Head of caudate nucleus (tissue), 42 donors: ENCODE measurements at regions of chr1 and their contacts with region 1.

Region 1: GRCh38 chr1:178542560-178543356 is 29.8 kb downstream of the TEX35 start:
- DNase-seq: peak; percentile 76 to 97 (median 90)

Region 2: DNA sequence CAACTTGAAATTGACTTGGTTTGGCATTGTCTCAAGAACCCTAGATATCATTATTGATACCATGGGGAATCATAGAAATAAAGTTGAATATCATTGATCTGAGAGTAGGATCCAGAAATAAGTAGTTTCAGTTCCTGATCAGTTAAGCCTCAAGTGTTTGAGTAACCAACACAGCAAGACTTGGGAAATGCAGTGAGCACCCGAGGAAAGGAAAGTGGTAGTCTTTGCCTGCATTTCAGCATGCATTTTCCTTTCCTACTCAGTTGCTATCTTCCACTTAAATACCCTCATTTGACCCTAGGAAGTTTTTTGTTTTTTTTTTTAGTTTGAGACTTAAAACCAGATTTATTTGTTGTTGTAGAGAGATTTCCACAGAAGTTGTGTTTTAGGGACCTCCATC is 64.9 kb before region 1 on chr1:
- intact Hi-C with region 1: no loop called
- DNase-seq: no peak

Region 3: GRCh38 chr1:178612261-178612660 is 69.5 kb after region 1 on chr1:
- intact Hi-C with region 1: no loop called
- DNase-seq: peak in 1 of 42 donors; percentile 1

Region 4: DNA sequence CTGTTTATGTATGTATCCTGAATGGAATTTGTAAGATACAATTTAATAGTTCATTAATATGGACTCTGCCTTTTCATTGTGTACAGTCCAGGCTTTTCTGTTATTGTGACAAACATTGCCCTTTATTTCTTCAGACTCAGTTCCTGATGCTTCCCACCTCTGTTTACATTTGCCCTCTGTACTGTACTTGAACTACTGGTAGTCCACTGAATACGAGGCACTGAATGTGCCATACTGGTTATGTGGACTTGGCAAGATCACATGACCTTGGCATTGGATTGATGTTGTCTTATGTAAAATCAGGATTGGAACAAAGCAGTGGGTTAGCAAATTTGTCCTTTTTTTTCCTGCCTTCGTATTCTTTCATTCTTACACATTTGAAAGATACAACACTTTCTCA is 210.1 kb after region 1 on chr1:
- intact Hi-C with region 1: loop called (anchors 2 kb)
- DNase-seq: no peak

Region 5: GRCh38 chr1:178877896-178878295 is 335.1 kb after region 1 on chr1:
- intact Hi-C with region 1: no loop called
- DNase-seq: no peak